ENCODE measurements at regions of chr4 and their contacts with region 1.

Region 1: DNA sequence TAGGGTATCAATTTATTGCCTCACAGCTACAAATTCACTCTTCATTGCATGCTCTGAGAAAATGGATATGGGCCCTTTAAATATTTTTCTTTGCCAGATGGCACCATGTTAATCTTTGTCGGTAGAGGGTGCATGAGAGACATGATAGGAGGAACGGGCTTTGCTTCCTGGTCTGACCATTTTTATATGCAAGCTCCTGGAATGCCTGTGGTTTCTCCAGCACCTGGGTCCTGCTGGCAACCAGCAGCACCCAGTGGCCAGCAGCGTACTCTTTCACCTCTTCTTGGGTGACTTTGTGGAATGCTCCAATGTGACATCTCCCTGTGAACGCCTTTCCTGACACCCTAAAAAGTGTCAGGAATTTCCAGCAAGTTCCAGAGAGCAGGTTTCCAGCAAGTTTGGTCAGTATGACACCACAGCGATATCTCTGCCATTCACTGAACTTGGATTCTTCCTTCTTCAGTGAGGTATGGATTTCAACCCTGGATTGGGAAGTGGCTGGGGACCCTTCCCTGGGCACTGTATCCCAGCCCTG is 140.3 kb upstream of the PGRMC2 start:
- DNase-seq: no peak

Region 2: GRCh38 chr4:128191115-128191781 is 236.7 kb before region 1 on chr4:
- intact Hi-C with region 1: loop called (anchors 10 kb)
- DNase-seq: peak; percentile 79

Region 3: GRCh38 chr4:128737098-128737513 is 309.2 kb after region 1 on chr4:
- intact Hi-C with region 1: no loop called
- DNase-seq: no peak